MCF 10A (cell line): ENCODE measurements at regions of chr19 and their contacts with region 1.

Region 1: GRCh38 chr19:15177269-15178116 is 23.3 kb downstream of the NOTCH3 start:
- DNase-seq: peak; percentile 76
- H3K4me3 Mint-ChIP-seq: peak overlapping the region; percentile 25
- H3K27ac Mint-ChIP-seq: no peak overlapping the region
- H3K4me1 Mint-ChIP-seq: peaks cover 7% of the 10 kb centered on the region
- H3K27me3 Mint-ChIP-seq: no peaks in the 10 kb centered on the region
- CTCF ChIP-seq: peak; percentile 92

Region 2: DNA sequence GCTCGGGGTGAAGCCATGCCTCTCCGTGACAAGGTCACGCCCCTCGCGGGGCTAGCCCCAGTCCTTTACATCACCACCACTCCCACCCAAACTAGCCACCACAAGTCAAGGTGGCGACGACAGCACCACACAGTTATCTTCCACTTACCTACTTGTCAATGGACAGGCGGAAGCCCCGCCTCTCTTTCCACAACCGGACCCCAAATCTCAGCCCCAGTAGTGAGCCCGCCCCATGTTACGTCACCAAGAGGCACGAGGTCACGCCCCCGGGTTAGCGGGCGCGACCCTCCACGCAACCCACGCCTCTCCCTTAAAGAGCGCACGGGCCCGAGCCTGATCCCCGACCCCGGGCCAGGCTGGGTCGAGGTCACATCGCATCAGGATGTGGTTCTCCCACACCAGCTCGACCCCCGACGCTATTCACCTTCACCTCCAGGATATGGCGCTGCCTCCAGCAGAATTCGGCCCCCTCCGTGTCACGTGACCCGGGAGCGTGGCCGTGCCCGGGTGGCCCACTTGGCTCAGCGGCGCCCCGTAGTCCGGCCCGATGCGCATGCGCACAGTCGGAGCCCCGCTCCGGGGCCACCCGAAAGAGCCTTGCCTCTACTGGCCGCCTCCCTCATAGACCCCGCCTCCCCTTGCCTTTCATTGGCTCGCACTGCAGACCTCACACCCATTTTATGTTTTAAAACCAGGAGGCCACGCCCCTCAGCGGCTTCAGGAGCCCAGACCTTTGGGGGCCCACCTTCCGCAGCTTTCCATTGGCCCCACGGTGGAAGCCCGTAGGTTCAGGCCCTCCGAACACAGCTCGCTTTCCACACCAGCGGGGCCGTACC is 52.0 kb before region 1 on chr19:
- CTCF ChIA-PET with region 1: no interaction called
- POLR2A ChIA-PET with region 1: no interaction called
- intact Hi-C with region 1: no loop called
- DNase-seq: peak; percentile 99
- H3K4me3 Mint-ChIP-seq: peak overlapping the region; percentile 93
- H3K27ac Mint-ChIP-seq: peak overlapping the region; percentile 89
- H3K4me1 Mint-ChIP-seq: peaks cover 8% of the 10 kb centered on the region
- H3K27me3 Mint-ChIP-seq: no peaks in the 10 kb centered on the region
- CTCF ChIP-seq: peak; percentile 6

Region 3: DNA sequence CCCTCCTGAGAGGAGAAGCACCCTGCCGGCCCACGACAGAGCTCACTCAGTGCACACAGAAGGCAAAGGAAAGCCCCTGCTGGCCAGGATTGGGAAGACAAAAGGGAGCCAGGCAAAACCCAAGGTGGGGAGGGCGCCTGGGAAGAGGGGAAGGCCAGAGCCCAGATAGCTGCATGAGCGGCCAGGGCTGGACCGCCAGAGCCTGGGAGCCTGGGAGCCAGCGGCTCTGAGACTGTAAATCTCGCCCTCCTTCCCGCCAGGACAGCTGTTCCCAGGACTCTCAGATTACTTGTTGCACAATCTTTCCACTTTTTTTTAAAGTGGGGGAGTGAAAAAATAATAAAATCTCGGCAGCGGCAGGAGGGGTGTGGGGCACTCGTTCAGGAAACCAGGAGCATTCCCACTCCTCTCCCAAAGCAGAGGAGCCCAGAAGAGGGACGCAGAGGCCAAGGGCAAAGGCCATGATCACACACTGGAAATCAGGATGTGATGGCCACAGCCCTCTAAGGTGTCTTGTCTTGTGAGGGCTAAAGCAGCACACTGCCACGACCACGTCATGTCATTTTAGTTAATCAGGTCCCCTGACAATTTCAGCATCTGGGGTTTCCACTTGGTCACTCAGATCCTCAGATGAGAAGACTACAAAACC is 74.4 kb after region 1 on chr19:
- CTCF ChIA-PET with region 1: interaction called, 4 read pairs
- POLR2A ChIA-PET with region 1: interaction called, 4 read pairs
- intact Hi-C with region 1: loop called (anchors 5 kb)
- DNase-seq: peak; percentile 97
- H3K4me3 Mint-ChIP-seq: no peak overlapping the region
- H3K27ac Mint-ChIP-seq: no peak overlapping the region
- H3K4me1 Mint-ChIP-seq: peaks cover 22% of the 10 kb centered on the region
- H3K27me3 Mint-ChIP-seq: no peaks in the 10 kb centered on the region
- CTCF ChIP-seq: peak; percentile 26

Region 4: DNA sequence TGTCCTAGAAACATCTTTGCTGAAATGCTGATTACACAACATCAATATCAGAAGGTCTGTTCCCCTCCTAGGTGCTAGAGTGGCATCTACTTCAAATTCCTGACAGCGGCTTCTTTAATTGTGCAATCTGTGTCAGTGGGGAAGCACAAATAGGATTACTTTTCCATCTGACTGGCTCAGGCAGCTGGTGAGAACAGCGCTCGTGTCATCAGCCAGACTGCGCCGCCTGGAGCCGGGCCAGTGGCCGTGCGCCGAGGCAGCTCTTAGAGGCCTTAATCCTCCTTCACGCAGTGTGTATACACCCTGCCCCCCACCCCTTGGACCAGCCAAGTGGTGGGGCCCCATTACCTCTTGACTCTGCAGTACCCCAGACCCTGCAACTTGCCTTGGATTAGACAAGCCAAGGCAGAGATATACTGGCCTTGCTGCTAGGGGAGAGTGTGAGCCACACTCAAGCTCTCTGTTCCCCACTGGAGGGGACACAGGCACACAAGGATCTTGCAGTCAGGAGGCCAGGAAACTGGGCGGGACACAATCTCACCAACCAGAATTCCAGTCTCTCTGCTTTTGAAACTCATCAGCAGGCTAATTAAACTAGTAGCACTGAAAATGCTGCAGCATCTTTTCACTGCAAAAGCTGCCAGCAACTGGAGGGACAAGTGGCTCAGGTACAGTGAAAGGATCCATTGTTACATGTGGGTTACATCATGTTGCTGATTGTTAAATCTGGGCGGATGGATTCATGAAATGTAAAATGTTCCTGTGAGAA is 103.6 kb after region 1 on chr19:
- CTCF ChIA-PET with region 1: no interaction called
- POLR2A ChIA-PET with region 1: no interaction called
- intact Hi-C with region 1: no loop called
- DNase-seq: peak; percentile 91
- H3K4me3 Mint-ChIP-seq: peak overlapping the region; percentile 17
- H3K27ac Mint-ChIP-seq: peak overlapping the region; percentile 63
- H3K4me1 Mint-ChIP-seq: peaks cover 57% of the 10 kb centered on the region
- H3K27me3 Mint-ChIP-seq: no peaks in the 10 kb centered on the region
- CTCF ChIP-seq: no peak

Region 5: GRCh38 chr19:15555759-15556633 is 378.5 kb after region 1 on chr19:
- CTCF ChIA-PET with region 1: interaction called, 4 read pairs
- POLR2A ChIA-PET with region 1: no interaction called
- intact Hi-C with region 1: loop called (anchors 1 kb)
- DNase-seq: peak; percentile 90
- H3K4me3 Mint-ChIP-seq: peak overlapping the region; percentile 60
- H3K27ac Mint-ChIP-seq: no peak overlapping the region
- H3K4me1 Mint-ChIP-seq: peaks cover 11% of the 10 kb centered on the region
- H3K27me3 Mint-ChIP-seq: no peaks in the 10 kb centered on the region
- CTCF ChIP-seq: peak; percentile 81